Ovary (tissue), 10 donors: ENCODE measurements at regions of chr4 and their contacts with region 1.

Region 1: DNA sequence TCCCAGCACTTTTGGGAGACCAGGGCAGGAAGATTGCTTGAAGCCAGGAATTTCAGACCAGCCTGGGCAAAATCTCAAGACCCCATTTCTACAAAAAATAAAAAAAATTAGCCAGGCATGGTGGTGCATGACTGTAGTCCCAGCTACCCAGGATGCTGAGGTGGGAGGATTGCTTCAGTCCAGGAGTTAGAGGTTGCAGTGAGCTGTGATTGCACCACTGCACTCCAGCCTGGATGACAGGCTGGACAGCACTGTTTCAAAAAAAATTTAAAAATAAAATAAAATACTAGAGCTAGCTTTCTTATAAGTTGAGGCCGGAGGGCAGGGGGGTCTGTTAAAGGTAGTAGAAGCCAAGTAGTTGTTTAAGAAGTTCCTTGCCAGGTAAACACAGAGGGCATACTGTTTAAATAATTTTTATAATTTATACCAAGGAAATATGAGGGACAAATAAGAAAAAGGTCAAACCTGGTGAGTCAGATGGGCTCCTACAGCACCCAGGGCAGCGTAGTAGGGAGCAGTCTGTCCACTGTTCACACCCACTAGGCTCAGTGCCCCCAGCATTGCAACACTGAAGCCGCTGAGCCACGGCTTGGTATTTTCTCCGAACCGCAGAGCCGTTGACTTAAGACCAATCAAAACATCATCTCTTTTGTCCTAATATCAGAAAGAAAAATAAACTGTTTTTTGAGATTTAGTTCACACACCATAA is 17.3 kb downstream of the COQ2 start:
- DNase-seq: no peak
- H3K4me3 ChIP-seq: no peak overlapping the region
- H3K27ac ChIP-seq: no peak overlapping the region
- H3K4me1 ChIP-seq: peaks cover 6% of the 10 kb centered on the region
- H3K27me3 ChIP-seq: no peaks in the 10 kb centered on the region
- CTCF ChIP-seq: no peak
- EP300 ChIP-seq: no peak
- POLR2A ChIP-seq: no peak

Region 2: DNA sequence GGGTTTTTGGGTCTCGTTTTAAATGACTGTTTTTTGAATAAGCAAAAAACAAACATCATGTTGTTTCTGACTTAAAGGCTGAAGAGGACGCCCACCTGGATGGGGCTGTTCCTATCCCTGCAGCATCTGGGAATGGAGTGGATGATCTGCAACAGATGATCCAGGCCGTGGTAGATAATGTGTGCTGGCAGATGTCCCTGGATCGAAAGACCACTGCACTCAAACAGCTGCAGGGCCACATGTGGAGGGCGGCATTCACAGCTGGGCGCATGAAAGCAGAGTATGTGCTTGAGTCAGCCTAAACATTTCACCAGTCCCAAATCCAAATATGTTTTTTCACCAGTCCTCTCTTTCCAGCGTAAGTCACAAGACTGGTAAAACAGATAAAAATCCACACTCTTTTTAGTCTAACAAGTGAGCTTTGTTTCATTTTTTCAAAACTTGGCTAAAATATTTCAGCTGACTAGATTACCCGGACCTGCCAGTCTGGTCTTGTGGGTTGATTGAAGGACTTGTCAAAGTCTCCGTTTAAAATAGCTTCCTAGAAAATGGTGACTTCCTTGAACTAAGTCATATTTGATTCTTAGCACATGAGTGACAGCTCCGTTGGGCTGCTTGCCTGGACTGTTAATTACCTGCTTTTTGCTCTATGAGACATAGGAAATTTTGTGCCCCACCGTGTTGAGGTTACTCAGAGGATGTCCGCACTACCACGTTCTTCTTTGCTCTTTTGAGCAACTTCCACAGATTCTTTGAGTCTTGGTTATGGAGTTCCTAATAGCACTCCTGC is 816.1 kb before region 1 on chr4:
- intact Hi-C with region 1: loop called in 1 of 4 experiments (anchors 10 kb)
- DNase-seq: no peak
- H3K4me3 ChIP-seq: no peak overlapping the region
- H3K27ac ChIP-seq: no peak overlapping the region
- H3K4me1 ChIP-seq: no peaks in the 10 kb centered on the region
- H3K27me3 ChIP-seq: no peaks in the 10 kb centered on the region
- CTCF ChIP-seq: no peak
- EP300 ChIP-seq: no peak
- POLR2A ChIP-seq: no peak

Region 3: GRCh38 chr4:82462415-82462831 is 804.9 kb before region 1 on chr4:
- intact Hi-C with region 1: loop called in 2 of 4 experiments (anchors 10 kb)
- DNase-seq: peak; percentile 88 to 96 (median 94)
- H3K4me3 ChIP-seq: no peak overlapping the region
- H3K27ac ChIP-seq: peak overlapping the region in 1 of 2 donors; percentile 36
- H3K4me1 ChIP-seq: no peaks in the 10 kb centered on the region
- H3K27me3 ChIP-seq: no peaks in the 10 kb centered on the region
- CTCF ChIP-seq: peak; percentile 50 to 75 (median 70)
- EP300 ChIP-seq: no peak
- POLR2A ChIP-seq: no peak

Region 4: GRCh38 chr4:83074086-83074704 is 193.1 kb before region 1 on chr4:
- intact Hi-C with region 1: loop called in 1 of 4 experiments (anchors 10 kb)
- DNase-seq: no peak
- H3K4me3 ChIP-seq: no peak overlapping the region
- H3K27ac ChIP-seq: no peak overlapping the region
- H3K4me1 ChIP-seq: no peaks in the 10 kb centered on the region
- H3K27me3 ChIP-seq: no peaks in the 10 kb centered on the region
- CTCF ChIP-seq: peak in 1 of 3 donors; percentile 31
- EP300 ChIP-seq: no peak
- POLR2A ChIP-seq: no peak